Right ventricle myocardium inferior (tissue), 1 donor: ENCODE measurements at regions of chr1 and their contacts with region 1.

Region 1: DNA sequence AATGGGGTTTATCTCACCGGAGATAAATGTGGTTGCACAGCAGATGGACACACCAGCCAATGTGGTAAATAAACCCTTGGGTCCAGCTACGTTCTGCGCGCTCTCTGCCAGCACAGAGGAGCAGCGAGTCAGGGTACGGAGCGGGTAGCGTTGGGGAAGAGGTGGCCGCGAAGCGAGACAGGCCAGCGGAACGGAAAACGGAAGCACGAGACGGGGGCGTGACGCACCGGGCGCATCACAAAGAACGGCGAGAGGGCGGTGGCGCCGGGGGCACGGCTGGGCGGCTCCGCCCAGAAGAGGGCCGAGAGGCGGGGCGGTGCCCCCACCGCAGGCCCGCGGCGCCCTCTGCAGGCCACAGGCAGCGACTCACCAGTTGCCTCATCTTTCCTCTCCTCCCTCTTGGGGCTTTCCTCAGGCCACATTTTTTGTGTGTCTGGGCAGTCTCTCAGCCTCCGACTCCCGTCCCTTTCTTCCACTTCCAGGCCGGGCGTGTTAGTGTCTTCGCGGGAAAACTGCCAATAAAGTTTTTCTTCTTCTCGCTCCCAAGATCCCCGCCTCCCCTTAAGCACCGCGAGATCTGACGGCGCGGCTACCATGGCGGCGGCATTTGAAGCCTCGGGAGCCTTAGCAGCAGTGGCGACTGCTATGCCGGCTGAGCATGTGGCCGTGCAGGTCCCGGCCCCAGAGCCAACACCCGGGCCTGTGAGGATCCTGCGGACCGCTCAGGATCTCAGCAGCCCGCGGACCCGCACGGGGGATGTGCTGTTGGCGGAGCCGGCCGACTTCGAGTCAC is at the start of gene DDX20:
- DNase-seq: peak; percentile 97
- ATAC-seq: peak; percentile 98
- total RNA-seq, gene DDX20: 6.6 TPM

Region 2: DNA sequence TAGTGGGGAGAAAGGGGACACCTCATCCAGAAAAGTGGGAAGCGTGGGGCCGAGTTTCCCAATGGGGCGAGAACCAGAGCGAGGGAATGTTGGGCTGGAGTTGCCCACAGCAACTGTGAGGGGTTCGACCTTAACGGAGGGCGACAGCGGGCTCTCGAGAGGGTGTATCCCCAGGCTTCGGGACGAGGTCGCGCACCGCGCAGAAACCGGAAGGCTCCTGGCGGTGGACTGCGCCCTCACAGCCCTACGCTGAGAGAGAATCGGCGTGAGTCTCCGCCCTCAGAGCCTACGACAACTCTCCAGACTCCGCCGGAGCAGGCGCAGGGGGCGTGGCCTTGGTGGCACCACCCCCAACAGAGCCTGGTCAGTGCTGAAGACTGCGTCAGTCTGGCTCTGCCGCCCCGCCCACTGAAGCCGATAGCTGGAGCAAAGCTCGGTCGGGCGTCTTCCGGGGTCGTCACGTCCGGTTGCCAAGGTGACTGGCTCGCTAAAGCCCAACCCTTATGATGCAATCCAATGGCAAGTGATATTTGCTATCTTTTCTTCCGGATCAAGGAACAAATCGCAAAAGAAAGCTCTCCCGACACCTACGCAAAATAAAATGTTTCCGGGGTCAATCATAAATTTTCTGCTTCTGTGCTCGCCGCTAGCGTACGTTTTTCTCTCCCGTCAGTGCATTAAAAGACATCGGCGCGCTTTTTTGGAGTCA is 791.7 kb before region 1 on chr1 and contains the start of gene LRIF1:
- intact Hi-C with region 1: loop called (anchors 10 kb)
- DNase-seq: peak; percentile 100
- ATAC-seq: peak; percentile 100
- total RNA-seq, gene LRIF1: 17.4 TPM

Region 3: GRCh38 chr1:111507411-111508201 is 247.9 kb before region 1 on chr1:
- intact Hi-C with region 1: loop called (anchors 5 kb)
- DNase-seq: peak; percentile 91
- ATAC-seq: peak; percentile 73